ENCODE measurements at regions of chrX and their contacts with region 1.

Region 1: DNA sequence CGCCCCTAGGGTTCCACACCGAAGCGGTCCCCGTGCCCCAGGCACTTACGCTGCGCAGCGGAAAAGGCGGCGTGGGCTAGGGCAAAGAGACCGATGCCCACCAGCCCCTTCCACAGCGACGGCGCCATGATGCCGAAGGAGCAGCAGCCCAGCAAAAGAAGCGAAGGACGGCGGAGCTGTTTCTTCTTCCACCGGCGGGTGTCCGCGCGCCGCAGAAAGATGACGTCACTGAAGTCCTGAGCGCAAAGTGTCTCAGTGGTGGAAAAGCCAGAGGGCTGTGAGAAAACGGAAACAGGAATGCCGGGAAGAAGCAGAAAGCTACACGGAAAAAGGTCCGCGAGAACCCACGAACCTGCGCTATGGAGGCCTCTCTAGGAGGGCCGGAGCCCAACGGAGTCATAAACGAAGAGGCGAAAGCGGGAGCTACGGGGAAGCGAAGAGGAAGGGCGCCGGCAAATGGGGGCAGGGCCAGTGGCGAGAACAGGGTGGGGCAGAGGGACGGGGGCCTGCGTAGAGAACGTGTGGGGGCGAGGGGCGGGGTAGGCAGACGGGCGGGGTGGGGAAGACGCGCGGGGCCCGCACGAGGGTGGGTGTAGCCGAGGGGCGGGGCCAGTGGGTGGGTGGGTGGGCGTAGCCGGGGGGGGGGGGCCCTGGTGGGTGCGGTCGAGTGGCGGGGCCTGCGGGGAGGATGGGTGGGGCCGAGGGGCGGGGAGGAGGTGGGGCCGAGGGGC is at the start of gene MMGT1:
- DNase-seq: peak; percentile 80 to 84
- ATAC-seq: peak; percentile 91 to 96 (median 95)
- H3K4me3 ChIP-seq: peak within 1 kb of the TSS; percentile 64 to 90 (median 80)
- H3K27ac ChIP-seq: peak within 1 kb of the TSS; percentile 80 to 96 (median 92)
- H3K4me1 ChIP-seq: peaks cover 0 to 24% (median 16%) of the 10 kb centered on the region in 9 donors
- H3K27me3 ChIP-seq: no peaks in the 10 kb centered on the region
- CTCF ChIP-seq: no peak
- total RNA-seq, gene MMGT1: 22.4 to 29.5 (median 26.4) TPM

Region 2: GRCh38 chrX:134502686-134503085 is 1471.0 kb before region 1 on chrX:
- intact Hi-C with region 1: loop called in 1 of 10 experiments (anchors 10 kb)
- DNase-seq: no peak
- ATAC-seq: no peak
- H3K4me3 ChIP-seq: no peak overlapping the region
- H3K27ac ChIP-seq: no peak overlapping the region
- H3K4me1 ChIP-seq: no peaks in the 10 kb centered on the region
- H3K27me3 ChIP-seq: no peaks in the 10 kb centered on the region
- CTCF ChIP-seq: no peak

Region 3: DNA sequence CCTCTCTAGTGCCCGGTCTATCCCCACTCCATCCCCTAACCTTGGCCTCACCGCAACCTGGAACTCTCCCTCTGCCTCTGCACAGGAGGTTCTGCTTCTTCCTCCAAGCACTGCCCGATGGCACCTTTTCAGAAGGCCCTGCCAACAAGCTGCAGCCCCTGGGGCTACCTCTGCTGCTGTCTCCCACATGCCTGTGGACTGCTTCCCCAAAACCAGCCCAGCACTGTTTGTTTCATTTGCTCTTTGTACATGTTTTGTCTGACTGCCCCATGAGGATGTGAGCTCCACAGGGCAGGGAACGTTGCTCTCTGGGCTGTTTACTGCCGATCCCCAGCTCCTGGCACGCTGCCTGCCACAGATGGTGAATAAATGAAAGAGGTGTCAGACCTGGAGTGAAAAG is 367.8 kb before region 1 on chrX:
- intact Hi-C with region 1: no loop called
- DNase-seq: no peak
- ATAC-seq: no peak
- H3K4me3 ChIP-seq: no peak overlapping the region
- H3K27ac ChIP-seq: no peak overlapping the region
- H3K4me1 ChIP-seq: no peaks in the 10 kb centered on the region
- H3K27me3 ChIP-seq: peaks cover 0 to 22% (median 0%) of the 10 kb centered on the region in 7 donors
- CTCF ChIP-seq: no peak

Region 4: GRCh38 chrX:135893294-135893817 is 80.4 kb before region 1 on chrX and contains the starts of genes CT45A10 and SAGE1:
- intact Hi-C with region 1: no loop called
- DNase-seq: no peak
- ATAC-seq: no peak
- H3K4me3 ChIP-seq: no peak within 1 kb of the TSS
- H3K27ac ChIP-seq: no peak within 1 kb of the TSS
- H3K4me1 ChIP-seq: no peaks in the 10 kb centered on the region
- H3K27me3 ChIP-seq: no peaks in the 10 kb centered on the region
- CTCF ChIP-seq: no peak
- total RNA-seq, gene CT45A10: not detected
- total RNA-seq, gene SAGE1: not detected

Region 5: GRCh38 chrX:136496770-136497598 is 523.3 kb after region 1 on chrX and contains the start of gene HTATSF1:
- intact Hi-C with region 1: loop called in 1 of 10 experiments (anchors 2 kb)
- DNase-seq: peak; percentile 82 to 86
- ATAC-seq: peak; percentile 92 to 97 (median 94)
- H3K4me3 ChIP-seq: peak within 1 kb of the TSS; percentile 37 to 86 (median 74)
- H3K27ac ChIP-seq: peak within 1 kb of the TSS; percentile 86 to 98 (median 94)
- H3K4me1 ChIP-seq: peaks cover 0 to 22% (median 11%) of the 10 kb centered on the region in 9 donors
- H3K27me3 ChIP-seq: peaks cover 0 to 18% (median 0%) of the 10 kb centered on the region in 7 donors
- CTCF ChIP-seq: no peak
- total RNA-seq, gene HTATSF1: 55.0 to 77.8 (median 62.9) TPM